ENCODE measurements at regions of chr13 and their contacts with region 1.

Region 1: GRCh38 chr13:97280478-97280877 is 58.3 kb downstream of the MBNL2 start:
- DNase-seq: no peak
- H3K4me3 ChIP-seq: no peak overlapping the region
- H3K27ac ChIP-seq: peak overlapping the region; percentile 47 to 68
- H3K4me1 ChIP-seq: peaks cover 0 to 100% (median 63%) of the 10 kb centered on the region in 4 donors
- H3K27me3 ChIP-seq: no peaks in the 10 kb centered on the region
- CTCF ChIP-seq: no peak

Region 2: GRCh38 chr13:97165502-97166425 is 114.7 kb before region 1 on chr13:
- intact Hi-C with region 1: no loop called
- DNase-seq: no peak
- H3K4me3 ChIP-seq: no peak overlapping the region
- H3K27ac ChIP-seq: no peak overlapping the region
- H3K4me1 ChIP-seq: no peaks in the 10 kb centered on the region
- H3K27me3 ChIP-seq: no peaks in the 10 kb centered on the region
- CTCF ChIP-seq: no peak

Region 3: DNA sequence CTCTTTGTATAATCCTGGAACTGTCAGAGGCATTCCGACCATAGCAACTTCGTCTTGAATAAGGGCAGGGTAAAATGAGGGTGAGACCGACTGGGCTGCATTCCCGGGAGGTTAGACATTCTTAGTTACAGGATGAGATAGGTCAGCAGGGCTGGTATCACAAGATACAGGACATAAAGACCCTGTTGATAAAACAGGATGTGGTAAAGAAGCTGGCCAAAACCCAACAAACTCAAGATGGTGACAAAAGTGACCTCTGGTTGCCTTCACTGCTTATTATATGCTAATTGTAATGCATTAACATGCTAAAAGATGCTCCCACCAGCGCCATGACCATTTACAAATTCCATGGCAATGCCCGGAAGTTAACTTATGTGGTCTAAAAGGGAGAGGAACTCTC is 86.0 kb before region 1 on chr13:
- intact Hi-C with region 1: no loop called
- DNase-seq: no peak
- H3K4me3 ChIP-seq: no peak overlapping the region
- H3K27ac ChIP-seq: no peak overlapping the region
- H3K4me1 ChIP-seq: no peaks in the 10 kb centered on the region
- H3K27me3 ChIP-seq: no peaks in the 10 kb centered on the region
- CTCF ChIP-seq: no peak

Region 4: DNA sequence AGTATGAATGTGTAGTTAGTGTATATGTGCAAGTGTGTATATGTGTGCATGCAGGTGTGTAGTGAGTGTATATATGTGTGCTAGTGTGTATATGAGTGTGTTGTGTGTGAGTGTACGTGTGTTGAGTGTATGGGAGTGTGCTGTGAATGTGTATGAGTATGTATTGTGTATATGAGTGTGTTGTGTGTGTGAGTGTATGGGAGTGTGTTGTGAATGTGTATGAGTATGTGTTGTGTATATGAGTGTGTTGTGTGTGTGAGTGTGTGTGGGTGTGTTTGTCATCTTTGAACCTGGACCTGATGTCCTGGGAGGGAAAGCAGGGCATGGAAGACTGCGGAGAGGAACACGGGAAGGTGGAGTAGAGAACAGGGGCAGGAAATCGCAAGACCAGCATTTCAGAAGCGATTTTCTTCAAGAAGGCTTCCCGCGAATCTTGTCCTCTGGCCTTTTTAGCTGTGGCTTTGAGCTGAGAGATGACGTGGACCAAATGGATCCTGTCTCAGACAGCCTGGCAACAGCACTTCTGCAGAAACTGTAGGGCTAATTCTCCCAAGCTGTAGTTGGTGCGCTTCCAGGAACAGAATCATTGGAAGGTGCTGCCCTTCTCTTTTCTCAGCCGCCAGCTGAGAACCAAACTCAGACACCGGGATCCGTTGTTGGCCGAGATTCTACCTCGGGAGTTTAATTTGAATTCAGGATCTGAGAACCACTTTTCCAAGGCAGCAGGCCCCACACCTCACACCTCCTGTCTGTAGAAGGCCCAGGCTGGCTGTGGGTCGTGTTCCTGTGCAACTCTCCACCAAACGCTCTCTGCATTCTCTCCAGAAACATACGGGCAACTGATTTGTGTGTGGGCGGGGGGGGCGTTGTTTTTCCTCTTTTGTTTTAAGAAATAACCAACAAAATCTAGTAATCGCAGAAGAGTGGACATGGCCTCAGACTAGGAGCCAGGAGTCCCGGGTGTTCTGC is 58.8 kb after region 1 on chr13:
- intact Hi-C with region 1: loop called (anchors 10 kb)
- DNase-seq: peak; percentile 44 to 83
- H3K4me3 ChIP-seq: peak overlapping the region in 1 of 2 donors; percentile 17
- H3K27ac ChIP-seq: peak overlapping the region; percentile 72 to 73
- H3K4me1 ChIP-seq: peaks cover 0 to 64% (median 33%) of the 10 kb centered on the region in 4 donors
- H3K27me3 ChIP-seq: no peaks in the 10 kb centered on the region
- CTCF ChIP-seq: no peak